ENCODE measurements at regions of chr12 and their contacts with region 1.

Region 1: DNA sequence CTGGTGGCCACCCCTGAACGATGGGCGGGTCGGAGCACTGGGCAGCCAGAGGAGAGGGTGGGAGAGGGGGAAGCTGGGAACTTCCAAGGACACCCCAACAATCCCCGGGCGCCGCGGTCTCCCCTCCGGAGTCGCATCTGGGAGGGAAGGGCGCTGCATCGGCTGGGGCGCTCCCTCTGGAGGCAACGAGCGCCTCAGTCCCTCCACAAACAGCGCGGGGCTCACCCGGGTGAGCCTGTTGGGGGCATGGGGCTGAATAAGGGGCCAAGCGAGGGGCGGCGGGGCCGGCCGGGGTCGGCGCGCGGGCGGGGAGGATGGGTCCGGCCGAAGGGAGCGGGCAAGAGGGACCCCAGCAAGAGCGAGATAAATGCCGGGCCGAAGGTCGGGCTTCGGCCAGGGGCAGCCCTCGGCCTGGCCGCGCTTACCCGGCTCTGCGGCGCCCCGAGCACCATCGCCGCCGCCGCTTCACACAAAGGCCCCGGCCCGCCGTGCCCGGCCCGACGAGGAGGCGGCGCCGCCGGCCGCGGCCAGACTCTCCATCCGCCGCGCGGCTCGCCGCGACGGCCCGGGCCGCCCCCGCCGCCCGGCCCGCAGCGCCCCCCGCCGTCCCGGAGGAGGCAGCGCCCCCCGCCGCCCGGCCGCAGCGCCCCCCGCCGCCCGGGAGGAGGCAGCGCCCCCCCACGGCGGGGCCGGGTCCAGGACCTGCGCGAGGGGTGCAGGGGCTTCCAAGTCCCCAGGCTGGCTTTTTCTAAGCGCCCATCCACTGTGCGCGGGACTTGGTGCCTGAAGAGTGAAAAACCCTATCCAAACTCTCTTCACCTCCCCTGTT is at the start of gene ZBTB39:
- DNase-seq: peak; percentile 84
- ATAC-seq: peak; percentile 92
- H3K4me3 ChIP-seq: peak within 1 kb of the TSS; percentile 39 to 87 (median 70)
- H3K4me3 Mint-ChIP-seq: peak within 1 kb of the TSS; percentile 91
- H3K27ac ChIP-seq: peak within 1 kb of the TSS; percentile 43 to 86
- H3K27ac Mint-ChIP-seq: peak within 1 kb of the TSS; percentile 93
- H3K4me1 ChIP-seq: peaks cover 16 to 21% of the 10 kb centered on the region in 2 donors
- H3K4me1 Mint-ChIP-seq: peaks cover 41% of the 10 kb centered on the region
- H3K27me3 ChIP-seq: no peaks in the 10 kb centered on the region
- H3K27me3 Mint-ChIP-seq: no peaks in the 10 kb centered on the region
- CTCF ChIP-seq: peak; percentile 61
- total RNA-seq, gene ZBTB39: 13.9 and 15.6 TPM in 2 replicates

Region 2: DNA sequence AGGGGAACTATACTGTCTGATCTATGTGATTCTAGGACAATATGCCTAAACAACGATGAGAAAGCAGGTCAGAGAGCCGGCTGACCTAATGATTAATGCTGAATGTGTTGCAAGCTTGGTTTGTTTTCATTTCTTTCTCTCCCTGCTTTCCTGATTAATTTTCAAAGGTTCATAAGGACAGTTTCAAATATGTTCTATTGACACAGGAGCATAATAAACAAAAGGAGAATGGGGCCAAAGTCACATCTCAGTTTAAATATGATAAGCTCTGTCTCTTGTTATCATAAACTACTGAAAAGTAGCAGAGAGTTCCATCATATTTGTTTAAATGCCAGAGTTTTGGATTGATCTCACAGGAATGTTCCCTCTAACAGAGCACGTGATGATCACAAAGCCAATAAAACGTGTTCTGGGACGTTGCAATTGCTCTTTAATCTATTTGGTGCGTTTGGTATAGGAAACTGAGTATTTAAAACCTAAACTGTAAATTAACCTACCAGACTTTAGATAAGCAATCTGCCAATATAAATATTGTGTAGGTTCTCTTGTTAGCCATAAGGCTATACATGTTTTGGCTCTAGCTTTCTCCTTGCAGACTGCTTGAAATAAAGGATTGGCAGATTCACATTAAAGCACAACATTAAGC is 246.8 kb before region 1 on chr12:
- CTCF ChIA-PET with region 1: interaction called, 23 read pairs
- POLR2A ChIA-PET with region 1: no interaction called
- intact Hi-C with region 1: loop called (anchors 1 kb)
- DNase-seq: no peak
- ATAC-seq: no peak
- H3K4me3 ChIP-seq: no peak overlapping the region
- H3K4me3 Mint-ChIP-seq: no peak overlapping the region
- H3K27ac ChIP-seq: no peak overlapping the region
- H3K27ac Mint-ChIP-seq: no peak overlapping the region
- H3K4me1 ChIP-seq: no peaks in the 10 kb centered on the region
- H3K4me1 Mint-ChIP-seq: peaks cover 1% of the 10 kb centered on the region
- H3K27me3 ChIP-seq: no peaks in the 10 kb centered on the region
- H3K27me3 Mint-ChIP-seq: no peaks in the 10 kb centered on the region
- CTCF ChIP-seq: no peak

Region 3: GRCh38 chr12:57182921-57183790 is 177.0 kb after region 1 on chr12:
- CTCF ChIA-PET with region 1: interaction called, 7 read pairs
- POLR2A ChIA-PET with region 1: no interaction called
- intact Hi-C with region 1: loop called (anchors 2 kb)
- DNase-seq: peak; percentile 86
- ATAC-seq: peak; percentile 99
- H3K4me3 ChIP-seq: no peak overlapping the region
- H3K4me3 Mint-ChIP-seq: no peak overlapping the region
- H3K27ac ChIP-seq: no peak overlapping the region
- H3K27ac Mint-ChIP-seq: peak overlapping the region; percentile 1
- H3K4me1 ChIP-seq: peaks cover 0 to 6% of the 10 kb centered on the region in 2 donors
- H3K4me1 Mint-ChIP-seq: peaks cover 5% of the 10 kb centered on the region
- H3K27me3 ChIP-seq: no peaks in the 10 kb centered on the region
- H3K27me3 Mint-ChIP-seq: peaks cover 2% of the 10 kb centered on the region
- CTCF ChIP-seq: peak; percentile 88

Measured in B cell (primary cell).